ENCODE measurements at regions of chr6 and their contacts with region 1.

Region 1: GRCh38 chr6:149565527-149566409 is at the start of gene GINM1:
- DNase-seq: peak; percentile 95
- H3K4me3 ChIP-seq: peak within 1 kb of the TSS; percentile 83 to 100 (median 94)
- H3K27ac ChIP-seq: peak within 1 kb of the TSS; percentile 94 to 99 (median 96)
- H3K4me1 ChIP-seq: peaks cover 0 to 16% (median 12%) of the 10 kb centered on the region in 4 donors
- H3K27me3 ChIP-seq: no peaks in the 10 kb centered on the region
- CTCF ChIP-seq: peak; percentile 31 to 61 (median 58)
- EP300 ChIP-seq: no peak
- POLR2A ChIP-seq: no peak
- total RNA-seq, gene GINM1: 61.6 to 82.4 (median 74.4) TPM

Region 2: GRCh38 chr6:149508485-149508884 is 57.3 kb before region 1 on chr6:
- intact Hi-C with region 1: no loop called
- DNase-seq: no peak
- H3K4me3 ChIP-seq: no peak overlapping the region
- H3K27ac ChIP-seq: no peak overlapping the region
- H3K4me1 ChIP-seq: no peaks in the 10 kb centered on the region
- H3K27me3 ChIP-seq: no peaks in the 10 kb centered on the region
- CTCF ChIP-seq: no peak
- EP300 ChIP-seq: no peak
- POLR2A ChIP-seq: no peak

Region 3: GRCh38 chr6:149586149-149586548 is 20.4 kb after region 1 on chr6:
- intact Hi-C with region 1: no loop called
- DNase-seq: no peak
- H3K4me3 ChIP-seq: no peak overlapping the region
- H3K27ac ChIP-seq: no peak overlapping the region
- H3K4me1 ChIP-seq: no peaks in the 10 kb centered on the region
- H3K27me3 ChIP-seq: no peaks in the 10 kb centered on the region
- CTCF ChIP-seq: no peak
- EP300 ChIP-seq: no peak
- POLR2A ChIP-seq: no peak

Region 4: DNA sequence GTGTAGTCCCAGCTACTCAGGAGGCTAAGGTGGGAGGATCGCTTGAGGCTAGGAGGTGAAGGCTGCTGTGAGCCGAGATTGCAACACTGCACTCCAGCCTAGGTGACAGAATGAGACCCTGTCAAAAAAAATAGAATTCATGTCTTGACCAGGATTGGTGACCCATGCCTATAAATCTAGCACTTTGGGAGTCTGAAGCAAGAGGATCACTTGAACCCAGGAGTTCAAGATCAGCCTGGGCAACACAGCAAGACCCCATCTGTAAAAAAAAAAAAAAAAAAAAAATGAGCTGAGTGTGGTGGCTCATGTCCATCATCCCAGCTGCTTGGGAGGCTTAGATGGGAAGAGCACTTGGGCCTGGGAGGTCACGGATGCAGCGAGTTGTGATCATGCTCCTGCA is 34.7 kb after region 1 on chr6:
- intact Hi-C with region 1: no loop called
- DNase-seq: no peak
- H3K4me3 ChIP-seq: no peak overlapping the region
- H3K27ac ChIP-seq: no peak overlapping the region
- H3K4me1 ChIP-seq: no peaks in the 10 kb centered on the region
- H3K27me3 ChIP-seq: no peaks in the 10 kb centered on the region
- CTCF ChIP-seq: no peak
- EP300 ChIP-seq: no peak
- POLR2A ChIP-seq: no peak

Region 5: DNA sequence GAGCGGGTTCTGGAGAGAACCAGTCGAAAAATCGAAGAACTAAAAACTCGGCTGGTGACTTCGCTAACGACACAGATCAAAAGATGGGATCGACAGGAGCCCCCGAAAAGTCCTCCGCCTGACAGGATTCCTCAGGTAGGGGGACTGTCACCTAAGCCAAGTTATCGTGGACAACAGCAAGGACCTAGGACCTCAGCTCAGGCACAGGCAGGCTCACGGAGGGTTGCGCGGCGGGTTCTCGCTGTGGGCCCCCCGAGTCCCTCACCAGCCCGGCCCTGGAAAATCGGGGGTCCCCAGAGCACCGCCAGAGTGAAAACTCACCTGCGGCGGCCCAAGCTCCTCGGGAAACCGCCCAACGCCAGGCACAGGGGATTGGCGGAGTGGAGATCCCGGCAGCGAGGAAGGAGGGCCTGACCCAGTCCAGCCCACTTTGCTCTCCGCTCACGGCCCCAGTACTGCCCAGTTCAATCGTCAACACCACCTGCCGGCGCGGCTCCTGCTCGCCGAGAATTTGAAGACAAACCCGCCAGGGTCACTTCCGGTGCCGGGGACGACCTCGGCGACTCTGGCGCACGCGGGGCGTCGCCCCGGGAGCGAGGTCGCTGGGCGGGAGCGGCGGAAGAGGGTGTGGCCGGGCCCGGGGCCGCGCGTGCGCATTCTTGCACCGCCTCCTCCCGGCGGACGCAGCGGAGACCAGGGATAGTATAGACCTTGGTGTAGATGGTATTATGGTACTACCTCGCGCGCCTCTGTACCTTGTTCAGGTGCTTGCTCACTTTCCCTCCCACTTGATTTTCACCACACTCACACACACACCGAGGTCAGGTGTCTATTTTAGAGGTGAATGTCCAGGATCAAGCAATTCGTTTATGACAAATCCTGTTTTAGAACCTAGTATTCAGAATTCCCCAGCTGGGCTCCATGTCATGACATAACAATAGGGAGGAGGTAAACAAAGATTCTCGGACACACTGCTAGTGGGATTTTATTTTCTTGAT is 82.7 kb after region 1 on chr6 and contains the start of gene KATNA1:
- intact Hi-C with region 1: loop called (anchors 2 kb)
- DNase-seq: peak; percentile 89
- H3K4me3 ChIP-seq: peak within 1 kb of the TSS; percentile 78 to 98 (median 87)
- H3K27ac ChIP-seq: peak within 1 kb of the TSS; percentile 75 to 85 (median 82)
- H3K4me1 ChIP-seq: peaks cover 0 to 20% (median 12%) of the 10 kb centered on the region in 4 donors
- H3K27me3 ChIP-seq: no peaks in the 10 kb centered on the region
- CTCF ChIP-seq: no peak
- EP300 ChIP-seq: no peak
- POLR2A ChIP-seq: peak; percentile 24 to 58
- total RNA-seq, gene KATNA1: 17.5 to 22.5 (median 20.6) TPM

Region 6: DNA sequence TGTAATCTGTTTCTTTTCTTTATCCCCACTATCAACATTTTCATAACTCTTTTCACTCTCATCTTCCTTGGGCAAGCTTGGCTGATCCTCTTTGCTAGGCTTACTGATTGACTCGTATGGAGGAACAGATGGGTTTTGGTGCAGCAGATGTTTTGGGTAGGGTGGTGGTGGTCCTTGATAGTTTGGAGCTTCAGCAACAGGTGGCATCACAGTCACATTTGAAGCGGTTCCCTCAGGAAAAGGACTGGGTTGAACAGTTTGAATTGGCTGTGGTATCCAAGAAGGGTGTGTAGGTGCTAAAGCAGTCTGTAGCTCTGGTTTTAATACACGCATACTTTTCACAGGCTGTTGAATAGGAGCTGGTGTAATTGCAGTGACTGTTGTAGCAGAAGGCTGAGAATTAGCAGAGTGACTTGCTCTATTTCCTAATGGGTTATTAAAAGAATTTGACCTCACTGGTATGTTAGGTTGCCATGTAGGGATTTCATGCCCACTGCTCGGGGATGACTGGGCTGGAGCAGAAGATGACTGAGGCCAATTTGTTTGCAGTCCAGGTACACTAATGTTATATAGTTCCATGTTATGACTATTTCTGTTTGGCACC is 117.6 kb after region 1 on chr6:
- intact Hi-C with region 1: no loop called
- DNase-seq: no peak
- H3K4me3 ChIP-seq: no peak overlapping the region
- H3K27ac ChIP-seq: peak overlapping the region in 1 of 4 donors; percentile 38
- H3K4me1 ChIP-seq: peaks cover 0 to 22% (median 4%) of the 10 kb centered on the region in 4 donors
- H3K27me3 ChIP-seq: no peaks in the 10 kb centered on the region
- CTCF ChIP-seq: no peak
- EP300 ChIP-seq: no peak
- POLR2A ChIP-seq: no peak

Region 7: DNA sequence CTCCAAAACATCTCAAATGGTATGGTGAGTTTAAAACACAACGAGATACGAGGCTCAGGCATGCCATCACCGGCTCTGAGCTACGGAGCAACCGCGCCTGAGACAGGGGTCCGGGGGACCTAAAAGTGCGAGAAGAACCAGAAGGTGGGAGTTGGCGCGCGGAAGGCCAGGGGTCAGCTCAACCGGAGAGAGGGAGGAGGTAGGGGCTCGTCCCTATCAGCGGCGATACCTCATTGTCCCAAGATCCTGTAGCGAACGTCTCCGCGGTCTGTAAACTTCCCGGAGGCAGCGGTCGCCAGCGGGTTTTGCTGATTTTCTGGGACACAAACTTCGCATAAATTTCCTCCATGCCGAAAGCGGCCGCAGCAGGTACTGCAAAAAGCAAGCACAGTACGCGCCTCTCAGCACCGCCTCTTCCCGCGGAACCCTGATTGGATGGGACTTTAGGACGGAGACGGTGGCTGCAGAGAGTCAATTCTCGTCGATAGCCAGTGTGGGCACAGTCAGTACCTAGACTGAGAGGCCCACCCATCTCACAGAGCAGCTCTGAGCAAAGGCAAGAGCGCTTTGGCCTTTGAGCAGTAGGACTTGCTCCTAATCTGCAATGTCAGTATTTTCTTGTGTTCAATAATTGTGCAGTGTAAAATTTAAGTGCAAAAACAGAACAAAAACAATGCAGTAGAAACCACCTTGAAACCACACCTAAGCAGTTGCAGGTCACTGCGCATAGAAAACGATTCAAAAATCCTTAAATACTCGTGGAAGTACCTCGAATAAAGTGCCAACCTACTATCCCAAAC is 180.6 kb after region 1 on chr6 and contains the start of gene NUP43:
- intact Hi-C with region 1: loop called (anchors 10 kb)
- DNase-seq: peak; percentile 96
- H3K4me3 ChIP-seq: peak within 1 kb of the TSS; percentile 64 to 83 (median 72)
- H3K27ac ChIP-seq: peak within 1 kb of the TSS; percentile 76 to 86 (median 78)
- H3K4me1 ChIP-seq: peaks cover 0 to 36% (median 27%) of the 10 kb centered on the region in 4 donors
- H3K27me3 ChIP-seq: no peaks in the 10 kb centered on the region
- CTCF ChIP-seq: peak; percentile 46 to 85 (median 68)
- EP300 ChIP-seq: no peak
- POLR2A ChIP-seq: peak in 1 of 2 donors; percentile 9
- total RNA-seq, gene NUP43: 18.3 to 56.3 (median 33.3) TPM